Sigmoid colon (tissue), 7 donors: ENCODE measurements at regions of chr2 and their contacts with region 1.

Region 1: DNA sequence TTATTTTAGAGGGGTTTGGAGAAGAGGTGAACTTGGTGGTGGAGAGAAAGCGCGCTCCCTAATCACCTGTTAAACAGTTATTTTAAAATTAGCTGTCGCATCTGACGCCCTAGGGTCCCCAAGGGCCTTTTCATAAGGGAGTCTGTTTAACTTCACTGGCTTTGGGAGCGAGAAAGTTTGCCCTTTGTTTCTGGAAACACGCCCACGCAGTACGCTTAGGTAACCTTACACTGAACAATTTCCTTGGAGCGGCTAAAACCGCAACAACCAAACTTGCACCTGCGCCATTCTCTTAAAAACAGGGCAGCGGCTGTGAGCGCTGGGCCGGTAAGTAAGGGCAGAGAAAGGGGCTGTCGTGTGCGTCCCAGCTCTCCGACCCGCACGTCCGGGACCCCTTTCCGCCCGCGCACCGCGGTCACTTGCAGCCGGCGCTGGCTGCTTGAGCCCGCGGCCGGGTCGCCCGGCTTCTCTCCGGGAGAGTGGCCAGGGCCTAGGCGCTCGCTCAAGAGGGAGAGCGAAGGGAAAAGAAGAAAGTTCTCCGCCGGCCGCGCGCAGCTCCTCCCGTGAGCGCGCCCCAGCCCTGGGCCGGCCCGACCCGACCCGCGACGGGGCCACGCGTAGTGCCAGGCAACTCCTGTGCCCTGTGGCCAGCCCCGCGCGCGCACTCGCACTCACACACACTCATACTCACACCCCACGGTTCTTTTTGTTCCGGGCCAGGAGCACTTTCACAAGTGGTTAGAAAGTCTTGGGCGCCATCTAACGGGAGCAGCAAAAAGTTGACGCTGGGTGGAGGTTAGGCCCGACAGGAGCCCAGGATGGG is 19.2 kb downstream of the POU3F3 start:
- DNase-seq: peak; percentile 77
- H3K4me3 ChIP-seq: peak overlapping the region; percentile 27 to 57 (median 50)
- H3K27ac ChIP-seq: no peak overlapping the region
- H3K4me1 ChIP-seq: peaks cover 0 to 31% (median 21%) of the 10 kb centered on the region in 4 donors
- H3K27me3 ChIP-seq: peaks cover 22 to 56% (median 39%) of the 10 kb centered on the region in 3 donors
- CTCF ChIP-seq: peak in 2 of 4 experiments; percentile 28 to 48
- EP300 ChIP-seq: no peak
- POLR2A ChIP-seq: no peak

Region 2: GRCh38 chr2:104690255-104690984 is 182.7 kb before region 1 on chr2:
- intact Hi-C with region 1: no loop called
- DNase-seq: no peak
- H3K4me3 ChIP-seq: no peak overlapping the region
- H3K27ac ChIP-seq: no peak overlapping the region
- H3K4me1 ChIP-seq: peaks cover 0 to 10% (median 3%) of the 10 kb centered on the region in 4 donors
- H3K27me3 ChIP-seq: no peaks in the 10 kb centered on the region
- CTCF ChIP-seq: no peak
- EP300 ChIP-seq: no peak
- POLR2A ChIP-seq: no peak

Region 3: DNA sequence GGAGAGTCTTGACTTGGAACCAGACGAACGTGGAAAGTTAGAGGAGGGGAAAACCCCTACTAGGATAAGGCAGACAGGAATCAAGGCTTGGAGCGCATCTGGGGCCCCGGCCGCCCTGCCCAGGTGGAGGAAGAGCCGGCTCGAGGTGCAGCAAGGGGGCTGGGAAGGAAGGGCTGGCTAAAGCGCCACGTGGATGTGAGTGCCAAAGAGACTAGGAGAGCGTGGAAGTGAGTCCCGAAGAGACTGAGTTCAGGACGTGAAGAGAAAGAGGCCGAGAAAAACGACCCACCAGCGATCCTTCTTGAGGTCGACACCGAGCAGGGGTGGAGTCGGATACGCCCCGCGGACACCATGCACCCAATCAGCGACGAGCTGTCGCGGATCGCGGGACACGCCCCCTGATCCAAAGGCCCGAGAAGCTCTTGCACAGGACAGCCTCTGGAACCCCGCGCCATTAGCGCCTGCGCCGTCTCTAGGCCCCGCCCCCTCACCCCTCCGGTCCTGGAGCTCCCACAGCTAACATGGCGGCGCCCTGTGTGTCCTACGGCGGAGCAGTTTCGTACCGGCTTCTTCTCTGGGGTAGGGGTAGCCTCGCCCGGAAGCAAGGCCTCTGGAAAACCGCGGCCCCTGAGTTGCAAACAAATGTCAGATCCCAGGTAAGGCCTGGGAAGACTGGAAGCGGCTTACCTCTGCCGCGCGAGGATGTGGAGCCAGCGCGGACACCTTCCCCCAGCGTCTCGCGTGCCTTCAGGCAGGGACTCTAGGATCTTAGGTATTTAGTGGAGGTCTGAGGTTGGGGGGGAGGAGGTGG is 164.7 kb after region 1 on chr2 and contains the start of gene MRPS9:
- intact Hi-C with region 1: loop called (anchors 10 kb)
- DNase-seq: peak; percentile 99
- H3K4me3 ChIP-seq: peak within 1 kb of the TSS; percentile 69 to 93 (median 84)
- H3K27ac ChIP-seq: peak within 1 kb of the TSS; percentile 81 to 88 (median 87)
- H3K4me1 ChIP-seq: peaks cover 0 to 15% (median 12%) of the 10 kb centered on the region in 4 donors
- H3K27me3 ChIP-seq: no peaks in the 10 kb centered on the region
- CTCF ChIP-seq: no peak
- EP300 ChIP-seq: no peak
- POLR2A ChIP-seq: peak; percentile 9 to 16
- total RNA-seq, gene MRPS9: 13.8 to 18.4 (median 17.8) TPM

Region 4: GRCh38 chr2:106065268-106065982 is 1192.3 kb after region 1 on chr2:
- intact Hi-C with region 1: loop called (anchors 10 kb)
- DNase-seq: no peak
- H3K4me3 ChIP-seq: peak overlapping the region; percentile 37 to 58 (median 51)
- H3K27ac ChIP-seq: peak overlapping the region in 3 of 4 donors; percentile 20 to 71 (median 57)
- H3K4me1 ChIP-seq: peaks cover 0 to 24% (median 23%) of the 10 kb centered on the region in 4 donors
- H3K27me3 ChIP-seq: no peaks in the 10 kb centered on the region
- CTCF ChIP-seq: no peak
- EP300 ChIP-seq: no peak
- POLR2A ChIP-seq: no peak